Activated T-helper 1 cell treated with anti-CD3 and anti-CD28 coated beads, Interleukin-12 subunit alpha, Interleukin-12 subunit beta, Interleukin-2, Interleukin-4 antibody, amounts not matched to agents 30 ng/mL and 10 ng/mL and 1 ng/mL, durations not matched to agents 14 hours and 24 hours and 36 hours (primary cell): ENCODE measurements at regions of chr5 and their contacts with region 1.

Region 1: GRCh38 chr5:61162010-61162831 is at the start of gene SMIM15:
- DNase-seq: peak; percentile 81
- H3K4me3 Mint-ChIP-seq: peak within 1 kb of the TSS; percentile 95
- H3K27ac Mint-ChIP-seq: peak within 1 kb of the TSS; percentile 92
- H3K4me1 Mint-ChIP-seq: peaks cover 40% of the 10 kb centered on the region
- H3K27me3 Mint-ChIP-seq: no peaks in the 10 kb centered on the region
- total RNA-seq, gene SMIM15: 84.0 and 86.7 TPM in 2 replicates

Region 2: GRCh38 chr5:60243713-60244112 is 918.5 kb before region 1 on chr5:
- intact Hi-C with region 1: no loop called
- DNase-seq: no peak
- H3K4me3 Mint-ChIP-seq: no peak overlapping the region
- H3K27ac Mint-ChIP-seq: no peak overlapping the region
- H3K4me1 Mint-ChIP-seq: no peaks in the 10 kb centered on the region
- H3K27me3 Mint-ChIP-seq: no peaks in the 10 kb centered on the region

Region 3: DNA sequence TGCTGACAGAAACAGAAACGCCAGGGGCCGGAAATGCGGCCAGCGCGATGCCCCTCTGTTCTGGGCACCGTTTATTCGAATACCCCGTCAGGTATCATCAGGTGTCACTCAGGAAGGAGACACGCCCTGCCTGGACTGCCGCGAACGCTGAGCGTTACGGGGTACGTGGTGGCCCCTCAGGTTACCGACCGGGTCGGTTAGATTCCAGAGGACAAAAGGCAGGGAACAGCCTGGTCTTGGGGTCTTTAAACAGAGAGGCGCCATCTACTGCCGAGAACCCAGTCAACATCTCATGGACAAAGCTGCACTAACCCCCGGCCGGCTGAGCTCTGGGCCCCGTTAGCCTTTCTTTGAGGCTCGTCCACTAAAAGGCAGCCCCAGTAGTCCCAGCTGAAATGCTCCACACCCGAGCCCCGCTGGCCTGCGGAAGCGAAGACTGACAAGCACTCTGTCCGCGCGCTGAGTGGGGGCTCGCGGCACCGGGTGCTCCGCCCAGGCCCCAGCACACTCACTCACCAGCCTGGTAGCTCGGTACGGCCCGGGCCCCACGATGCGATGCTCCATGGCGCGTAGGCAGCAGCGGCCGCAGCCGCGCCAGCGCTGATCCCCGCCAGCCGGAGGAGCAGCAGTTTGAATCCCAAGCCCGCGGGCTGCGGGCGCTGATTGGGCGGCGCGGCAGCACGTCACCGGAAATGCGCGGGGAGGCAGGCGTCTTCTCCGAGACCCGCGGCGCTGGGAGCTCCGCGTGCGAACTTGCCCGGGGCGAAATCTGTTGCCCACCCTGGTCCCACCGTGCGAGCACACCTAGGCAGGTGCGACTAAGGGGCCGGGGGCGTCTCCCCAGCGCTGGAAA is 462.5 kb before region 1 on chr5 and contains the start of gene DEPDC1B:
- intact Hi-C with region 1: loop called (anchors 5 kb)
- DNase-seq: peak; percentile 87
- H3K4me3 Mint-ChIP-seq: peak within 1 kb of the TSS; percentile 96
- H3K27ac Mint-ChIP-seq: peak within 1 kb of the TSS; percentile 93
- H3K4me1 Mint-ChIP-seq: peaks cover 37% of the 10 kb centered on the region
- H3K27me3 Mint-ChIP-seq: peaks cover 18% of the 10 kb centered on the region
- total RNA-seq, gene DEPDC1B: 19.6 and 21.2 TPM in 2 replicates

Region 4: DNA sequence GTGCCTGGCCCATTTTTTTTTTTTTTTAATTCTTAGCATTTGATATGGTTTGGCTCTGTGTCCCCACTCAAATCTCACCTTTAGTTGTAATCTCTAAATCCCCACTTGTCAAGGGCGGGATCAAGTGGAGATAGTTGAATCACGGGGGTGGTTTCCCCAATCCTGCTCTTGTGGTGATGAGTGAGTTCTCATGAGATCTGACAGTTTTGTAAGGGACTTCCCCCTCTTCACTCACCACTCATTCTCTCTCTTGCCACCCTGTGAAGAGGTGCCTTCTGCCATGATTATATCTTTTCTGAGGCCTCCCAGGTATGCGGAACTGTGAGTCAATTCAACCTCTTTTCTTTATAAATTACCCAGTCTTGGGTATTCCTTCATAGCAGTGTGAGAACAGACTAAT is 190.0 kb before region 1 on chr5:
- intact Hi-C with region 1: loop called (anchors 10 kb)
- DNase-seq: no peak
- H3K4me3 Mint-ChIP-seq: no peak overlapping the region
- H3K27ac Mint-ChIP-seq: no peak overlapping the region
- H3K4me1 Mint-ChIP-seq: no peaks in the 10 kb centered on the region
- H3K27me3 Mint-ChIP-seq: no peaks in the 10 kb centered on the region

Region 5: GRCh38 chr5:61202213-61202612 is 40.0 kb after region 1 on chr5:
- intact Hi-C with region 1: loop called (anchors 1 kb)
- DNase-seq: no peak
- H3K4me3 Mint-ChIP-seq: no peak overlapping the region
- H3K27ac Mint-ChIP-seq: peak overlapping the region; percentile 7
- H3K4me1 Mint-ChIP-seq: peaks cover 11% of the 10 kb centered on the region
- H3K27me3 Mint-ChIP-seq: peaks cover 5% of the 10 kb centered on the region

Region 6: DNA sequence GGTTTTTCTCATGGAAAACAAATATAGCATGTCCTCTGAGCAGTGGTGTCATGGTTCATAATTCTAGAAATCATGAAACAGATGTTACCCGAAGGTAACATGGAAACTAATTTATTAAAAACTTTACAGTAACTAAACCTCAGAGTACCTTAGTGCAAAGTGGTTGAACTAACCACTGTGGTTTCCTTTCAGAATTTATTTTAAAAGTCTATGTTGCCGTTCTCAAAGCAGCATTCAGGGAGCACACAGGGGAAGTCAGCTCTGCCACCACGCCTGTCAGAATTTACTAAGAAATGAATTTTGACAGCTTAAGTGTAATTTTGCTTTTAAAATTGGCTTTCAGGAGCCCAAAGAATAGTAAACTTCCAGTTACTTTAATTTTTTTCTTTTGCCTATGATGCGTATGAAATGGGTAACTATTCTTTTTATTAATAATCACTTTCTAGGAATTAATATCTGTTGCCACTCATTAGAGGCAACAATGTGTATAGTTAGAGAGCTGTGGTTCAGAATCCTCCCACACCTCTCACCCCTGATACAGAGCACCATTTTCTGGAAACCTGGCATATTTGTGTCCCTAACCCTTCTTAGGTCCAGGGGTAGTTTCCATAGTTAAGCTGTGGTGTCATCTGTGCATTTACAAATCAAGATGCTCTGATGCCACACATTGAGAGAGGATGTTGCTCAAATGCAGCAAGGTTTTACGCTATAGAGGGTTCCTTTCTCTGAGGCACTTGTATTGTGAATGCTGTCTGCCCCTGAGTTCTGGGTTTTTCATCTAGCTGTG is 372.5 kb after region 1 on chr5:
- intact Hi-C with region 1: loop called (anchors 1 kb)
- DNase-seq: no peak
- H3K4me3 Mint-ChIP-seq: peak overlapping the region; percentile 25
- H3K27ac Mint-ChIP-seq: peak overlapping the region; percentile 69
- H3K4me1 Mint-ChIP-seq: peaks cover 16% of the 10 kb centered on the region
- H3K27me3 Mint-ChIP-seq: no peaks in the 10 kb centered on the region